ENCODE measurements at regions of chr6 and their contacts with region 1.

Region 1: GRCh38 chr6:127992144-127992543 is 91.3 kb upstream of the THEMIS start:
- DNase-seq: no peak
- ATAC-seq: no peak
- H3K4me3 ChIP-seq: no peak overlapping the region
- H3K27ac ChIP-seq: no peak overlapping the region
- H3K4me1 ChIP-seq: no peaks in the 10 kb centered on the region
- H3K27me3 ChIP-seq: no peaks in the 10 kb centered on the region
- CTCF ChIP-seq: no peak
- POLR2A ChIP-seq: no peak
- RAD21 ChIP-seq: no peak

Region 2: GRCh38 chr6:127869772-127870404 is 122.3 kb before region 1 on chr6:
- CTCF ChIA-PET with region 1: no interaction called
- POLR2A ChIA-PET with region 1: no interaction called
- dilution Hi-C with region 1: no loop called
- in situ Hi-C with region 1: no loop called
- intact Hi-C with region 1: loop called (anchors 5 kb)
- DNase-seq: no peak
- ATAC-seq: no peak
- H3K4me3 ChIP-seq: no peak overlapping the region
- H3K27ac ChIP-seq: no peak overlapping the region
- H3K4me1 ChIP-seq: no peaks in the 10 kb centered on the region
- H3K27me3 ChIP-seq: no peaks in the 10 kb centered on the region; the same call in 1 of the 2 replicates
- CTCF ChIP-seq: no peak
- POLR2A ChIP-seq: no peak
- RAD21 ChIP-seq: no peak

Region 3: DNA sequence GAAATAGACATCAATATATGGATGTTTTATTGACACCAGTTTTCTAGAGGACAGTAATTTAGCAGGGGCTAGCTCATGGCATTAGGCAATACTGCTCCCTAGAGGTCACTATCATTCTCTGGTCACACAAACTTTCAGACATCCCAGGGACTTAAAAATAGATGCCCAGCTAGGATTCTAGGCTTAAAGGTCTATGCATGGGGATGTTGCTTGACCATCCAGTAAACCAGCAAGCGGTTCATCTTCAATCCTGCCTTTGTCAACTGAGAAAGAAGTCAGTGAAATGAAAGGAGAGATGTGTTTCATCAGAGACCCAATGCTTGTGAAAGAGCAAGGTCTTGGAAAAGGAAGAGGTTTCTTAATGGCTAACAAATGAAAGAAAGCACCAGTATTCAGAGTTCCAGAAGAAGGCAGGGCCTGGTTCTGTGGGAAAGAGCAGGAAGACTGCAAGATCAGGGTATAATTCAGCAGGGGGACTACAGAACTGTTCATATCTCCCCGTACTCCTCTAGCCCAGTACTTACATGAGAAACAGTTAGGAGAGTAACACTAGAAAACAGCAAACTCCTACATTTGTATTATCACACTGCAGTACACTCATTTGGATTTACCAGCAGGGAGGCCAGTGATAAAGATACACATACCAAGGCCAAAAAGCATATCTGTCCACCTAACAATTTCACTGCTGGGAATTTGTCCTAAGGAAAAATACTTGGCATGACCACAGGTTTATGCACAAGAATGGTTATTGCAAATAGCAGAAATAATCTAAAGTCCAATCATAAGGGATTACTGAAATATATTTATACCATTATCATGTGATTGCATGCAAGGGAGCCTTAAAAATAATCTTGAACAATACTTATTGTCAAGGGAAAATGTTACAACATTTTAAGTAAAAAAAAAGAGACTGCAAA is 739.4 kb after region 1 on chr6:
- CTCF ChIA-PET with region 1: no interaction called
- POLR2A ChIA-PET with region 1: no interaction called
- dilution Hi-C with region 1: no loop called
- in situ Hi-C with region 1: no loop called
- intact Hi-C with region 1: loop called (anchors 10 kb)
- DNase-seq: peak; percentile 66
- ATAC-seq: peak; percentile 86
- H3K4me3 ChIP-seq: no peak overlapping the region
- H3K27ac ChIP-seq: no peak overlapping the region
- H3K4me1 ChIP-seq: no peaks in the 10 kb centered on the region
- H3K27me3 ChIP-seq: no peaks in the 10 kb centered on the region; the same call in 1 of the 2 replicates
- CTCF ChIP-seq: peak; percentile 80
- POLR2A ChIP-seq: 0 out of 2 replicates have a peak, but pooled peaks have one; percentile 23
- RAD21 ChIP-seq: peak; percentile 93

Measured in IMR-90 (cell line).